ENCODE measurements at regions of chr5 and their contacts with region 1.

Region 1: GRCh38 chr5:4216142-4216541 is 620.5 kb downstream of the IRX1 start:
- DNase-seq: no peak
- H3K4me3 ChIP-seq: no peak overlapping the region
- H3K27ac ChIP-seq: no peak overlapping the region
- H3K4me1 ChIP-seq: no peaks in the 10 kb centered on the region
- H3K27me3 ChIP-seq: no peaks in the 10 kb centered on the region
- CTCF ChIP-seq: no peak
- POLR2A ChIP-seq: no peak

Region 2: GRCh38 chr5:4252385-4252784 is 36.2 kb after region 1 on chr5:
- CTCF ChIA-PET with region 1: no interaction called
- POLR2A ChIA-PET with region 1: no interaction called
- dilution Hi-C with region 1: no loop called
- intact Hi-C with region 1: loop called (anchors 1 kb)
- DNase-seq: no peak
- H3K4me3 ChIP-seq: no peak overlapping the region
- H3K27ac ChIP-seq: no peak overlapping the region
- H3K4me1 ChIP-seq: no peaks in the 10 kb centered on the region
- H3K27me3 ChIP-seq: no peaks in the 10 kb centered on the region
- CTCF ChIP-seq: no peak
- POLR2A ChIP-seq: no peak

Region 3: DNA sequence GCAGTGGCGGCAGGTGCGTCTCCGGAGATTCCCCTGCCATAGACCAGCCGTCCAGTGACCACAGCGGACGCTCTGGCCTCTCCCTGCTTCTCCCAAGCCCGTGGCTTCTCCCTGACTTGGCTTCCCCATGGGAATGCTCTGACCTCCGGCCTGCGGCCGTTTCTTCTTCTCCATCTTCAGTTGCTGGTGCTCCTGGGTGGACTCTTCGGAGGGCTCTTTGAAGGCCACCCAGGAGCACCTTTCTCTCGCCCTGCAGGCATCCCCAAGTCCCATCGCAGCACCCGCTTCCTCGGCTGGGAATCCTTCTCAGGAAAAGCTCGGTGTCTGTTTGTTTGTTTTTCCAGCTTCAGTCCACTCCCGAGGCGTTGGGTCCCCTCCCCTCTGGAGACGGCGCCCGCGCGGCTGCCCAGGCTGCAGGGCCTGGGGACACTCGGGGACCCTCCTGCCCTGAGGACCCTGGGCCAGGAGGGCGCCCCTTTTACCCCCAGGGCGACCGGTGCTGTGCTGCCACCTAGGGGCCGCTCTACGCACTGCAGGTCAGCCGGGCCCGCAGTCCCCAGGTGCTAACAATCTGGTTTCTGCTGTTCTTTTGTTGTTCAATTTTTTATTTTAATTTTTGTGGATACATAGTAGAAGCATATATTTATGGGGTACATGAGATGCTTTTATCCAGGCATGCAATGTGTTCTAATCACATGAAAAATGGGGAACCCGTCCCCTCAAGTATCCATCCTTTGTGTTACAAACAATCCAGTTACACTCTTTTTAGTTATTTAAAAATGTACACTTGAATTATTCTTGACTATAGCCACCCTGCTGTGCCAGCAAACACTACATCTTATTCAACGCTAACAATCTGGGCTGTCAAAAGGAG is 726.1 kb after region 1 on chr5:
- CTCF ChIA-PET with region 1: no interaction called
- POLR2A ChIA-PET with region 1: no interaction called
- dilution Hi-C with region 1: no loop called
- intact Hi-C with region 1: no loop called
- DNase-seq: no peak
- H3K4me3 ChIP-seq: no peak overlapping the region
- H3K27ac ChIP-seq: no peak overlapping the region
- H3K4me1 ChIP-seq: no peaks in the 10 kb centered on the region
- H3K27me3 ChIP-seq: no peaks in the 10 kb centered on the region
- CTCF ChIP-seq: peak in 1 of 2 donors; percentile 22
- POLR2A ChIP-seq: no peak

Measured in endothelial cell of umbilical vein (primary cell).